ENCODE measurements at regions of chr2 and their contacts with region 1.

Region 1: GRCh38 chr2:220282236-220282635 is 654.8 kb downstream of the SLC4A3 start:
- DNase-seq: no peak
- H3K4me3 ChIP-seq: no peak overlapping the region
- H3K27ac ChIP-seq: no peak overlapping the region
- H3K4me1 ChIP-seq: peaks cover 0 to 5% (median under 1%) of the 10 kb centered on the region in 4 donors
- H3K27me3 ChIP-seq: no peaks in the 10 kb centered on the region
- CTCF ChIP-seq: no peak
- EP300 ChIP-seq: no peak
- POLR2A ChIP-seq: no peak

Region 2: GRCh38 chr2:220247588-220248350 is 34.5 kb before region 1 on chr2:
- in situ Hi-C with region 1: no loop called
- intact Hi-C with region 1: loop called (anchors 2 kb)
- DNase-seq: no peak
- H3K4me3 ChIP-seq: no peak overlapping the region
- H3K27ac ChIP-seq: no peak overlapping the region
- H3K4me1 ChIP-seq: no peaks in the 10 kb centered on the region
- H3K27me3 ChIP-seq: no peaks in the 10 kb centered on the region
- CTCF ChIP-seq: no peak
- EP300 ChIP-seq: no peak
- POLR2A ChIP-seq: no peak

Measured in transverse colon (tissue), 4 donors.